ENCODE measurements at regions of chr11 and their contacts with region 1.

Region 1: DNA sequence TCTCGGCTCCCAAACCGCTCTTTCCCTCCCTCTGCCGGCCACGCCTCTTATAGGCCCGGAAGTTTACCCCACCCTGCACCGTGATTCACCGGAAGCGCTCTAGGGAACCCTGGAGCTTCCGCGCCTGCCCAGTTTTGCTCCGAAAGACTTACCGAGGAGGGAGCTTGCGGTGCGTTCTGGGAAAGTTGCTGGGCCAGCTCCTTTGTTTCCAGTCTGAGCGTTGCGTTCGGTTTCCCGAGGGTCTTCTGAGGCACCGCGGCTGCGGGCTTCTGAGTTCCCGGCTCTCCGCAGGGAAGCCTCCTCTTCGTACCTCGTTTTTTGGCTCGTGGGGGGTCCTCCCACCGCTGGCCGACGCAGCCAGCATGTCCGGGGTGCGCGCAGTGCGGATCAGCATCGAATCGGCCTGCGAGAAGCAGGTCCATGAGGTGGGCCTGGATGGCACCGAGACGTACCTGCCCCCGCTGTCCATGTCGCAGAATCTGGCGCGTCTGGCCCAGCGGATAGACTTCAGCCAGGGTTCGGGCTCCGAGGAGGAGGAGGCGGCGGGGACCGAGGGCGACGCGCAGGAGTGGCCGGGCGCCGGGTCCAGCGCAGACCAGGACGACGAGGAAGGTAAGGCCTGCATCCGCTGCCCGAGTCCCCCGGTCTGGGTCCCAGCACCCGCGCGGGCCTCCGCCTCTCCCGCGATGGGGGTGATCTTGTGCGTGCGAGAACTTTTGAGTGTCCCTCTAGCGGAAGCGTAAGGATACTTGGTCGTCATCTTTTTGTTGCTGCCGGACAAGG is at the start of gene MED17:
- DNase-seq: peak; percentile 96
- H3K4me3 ChIP-seq: peak within 1 kb of the TSS; percentile 86
- H3K4me3 Mint-ChIP-seq: peak within 1 kb of the TSS; percentile 81
- H3K27ac Mint-ChIP-seq: peak within 1 kb of the TSS; percentile 62
- H3K4me1 ChIP-seq: no peaks in the 10 kb centered on the region; the same call in 1 of the 2 replicates
- H3K4me1 Mint-ChIP-seq: peaks cover 17% of the 10 kb centered on the region
- H3K27me3 ChIP-seq: no peaks in the 10 kb centered on the region
- H3K27me3 Mint-ChIP-seq: no peaks in the 10 kb centered on the region
- CTCF ChIP-seq: peak; percentile 72 to 76
- total RNA-seq, gene MED17: 54.0 and 63.5 TPM in 2 replicates

Region 2: DNA sequence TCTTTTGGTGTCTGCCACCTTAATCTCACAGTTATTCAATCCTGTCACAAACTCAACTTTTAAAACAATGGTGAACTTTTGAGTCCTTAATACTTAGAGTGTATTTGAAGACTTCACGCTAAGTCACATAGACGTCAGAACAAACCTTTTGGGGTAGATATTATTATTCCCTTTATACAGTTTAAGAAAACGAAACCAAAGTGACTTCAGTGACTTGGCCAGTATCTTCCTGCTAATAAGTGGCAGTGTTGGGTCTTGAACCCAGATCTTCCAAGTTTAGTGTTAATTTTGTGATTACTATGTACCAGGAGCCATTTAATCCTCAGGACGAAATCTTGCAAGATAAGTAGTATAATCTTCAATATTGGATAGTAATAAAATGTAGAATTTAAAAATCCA is 122.2 kb before region 1 on chr11:
- CTCF ChIA-PET with region 1: no interaction called
- POLR2A ChIA-PET with region 1: interaction called, 6 read pairs
- intact Hi-C with region 1: loop called (anchors 5 kb)
- DNase-seq: no peak
- H3K4me3 ChIP-seq: peak overlapping the region; percentile 86
- H3K4me3 Mint-ChIP-seq: peak overlapping the region; percentile 87
- H3K27ac Mint-ChIP-seq: peak overlapping the region; percentile 90
- H3K4me1 ChIP-seq: peaks cover 11% of the 10 kb centered on the region
- H3K4me1 Mint-ChIP-seq: no peaks in the 10 kb centered on the region
- H3K27me3 ChIP-seq: no peaks in the 10 kb centered on the region; the same call in 1 of the 2 replicates
- H3K27me3 Mint-ChIP-seq: no peaks in the 10 kb centered on the region
- CTCF ChIP-seq: no peak

Region 3: GRCh38 chr11:93766504-93766903 is 17.8 kb before region 1 on chr11:
- CTCF ChIA-PET with region 1: interaction called, 6 read pairs
- POLR2A ChIA-PET with region 1: interaction called, 9 read pairs
- intact Hi-C with region 1: loop called (anchors 1 kb)
- DNase-seq: no peak
- H3K4me3 ChIP-seq: no peak overlapping the region
- H3K4me3 Mint-ChIP-seq: no peak overlapping the region
- H3K27ac Mint-ChIP-seq: no peak overlapping the region
- H3K4me1 ChIP-seq: peaks cover 30% of the 10 kb centered on the region
- H3K4me1 Mint-ChIP-seq: peaks cover 28% of the 10 kb centered on the region
- H3K27me3 ChIP-seq: no peaks in the 10 kb centered on the region
- H3K27me3 Mint-ChIP-seq: no peaks in the 10 kb centered on the region
- CTCF ChIP-seq: no peak

Region 4: GRCh38 chr11:93849751-93850593 is 65.6 kb after region 1 on chr11:
- CTCF ChIA-PET with region 1: interaction called, 4 read pairs
- POLR2A ChIA-PET with region 1: interaction called, 8 read pairs
- intact Hi-C with region 1: loop called (anchors 2 kb)
- DNase-seq: peak; percentile 55 to 66
- H3K4me3 ChIP-seq: peak overlapping the region; percentile 45
- H3K4me3 Mint-ChIP-seq: peak overlapping the region; percentile 70
- H3K27ac Mint-ChIP-seq: peak overlapping the region; percentile 24
- H3K4me1 ChIP-seq: peaks cover 6% of the 10 kb centered on the region
- H3K4me1 Mint-ChIP-seq: no peaks in the 10 kb centered on the region
- H3K27me3 ChIP-seq: no peaks in the 10 kb centered on the region
- H3K27me3 Mint-ChIP-seq: no peaks in the 10 kb centered on the region
- CTCF ChIP-seq: peak in 1 of 2 experiments; percentile 49

Region 5: GRCh38 chr11:93921695-93922468 is 137.5 kb after region 1 on chr11:
- CTCF ChIA-PET with region 1: no interaction called
- POLR2A ChIA-PET with region 1: no interaction called
- intact Hi-C with region 1: no loop called
- DNase-seq: peak; percentile 71 to 77
- H3K4me3 ChIP-seq: no peak overlapping the region
- H3K4me3 Mint-ChIP-seq: no peak overlapping the region
- H3K27ac Mint-ChIP-seq: no peak overlapping the region
- H3K4me1 ChIP-seq: no peaks in the 10 kb centered on the region
- H3K4me1 Mint-ChIP-seq: peaks cover 10% of the 10 kb centered on the region
- H3K27me3 ChIP-seq: no peaks in the 10 kb centered on the region
- H3K27me3 Mint-ChIP-seq: peaks cover 4% of the 10 kb centered on the region
- CTCF ChIP-seq: peak; percentile 85 to 90

Region 6: DNA sequence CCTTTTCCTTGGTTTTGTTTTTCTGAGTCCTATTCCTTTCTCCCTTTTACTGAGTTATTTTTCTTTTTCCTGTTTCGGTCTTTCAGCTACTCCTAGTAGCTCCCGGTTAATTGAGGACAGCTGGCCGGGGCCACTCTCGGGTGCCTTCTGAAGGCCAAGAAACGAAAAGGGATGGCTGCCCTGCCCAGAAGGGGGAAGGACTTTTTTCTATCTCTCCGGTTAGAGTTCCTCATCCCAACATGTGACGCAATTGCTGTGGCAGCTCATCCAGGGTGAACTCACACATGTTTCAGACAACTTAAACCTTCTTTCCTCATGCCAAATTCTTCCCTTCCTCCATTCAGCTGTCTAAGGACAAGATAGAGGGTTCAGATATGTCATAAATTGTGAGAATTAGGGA is 866.4 kb after region 1 on chr11:
- CTCF ChIA-PET with region 1: no interaction called
- POLR2A ChIA-PET with region 1: no interaction called
- intact Hi-C with region 1: no loop called
- DNase-seq: no peak
- H3K4me3 ChIP-seq: no peak overlapping the region
- H3K4me3 Mint-ChIP-seq: no peak overlapping the region
- H3K27ac Mint-ChIP-seq: peak overlapping the region; percentile 4
- H3K4me1 ChIP-seq: peaks cover 17% of the 10 kb centered on the region
- H3K4me1 Mint-ChIP-seq: peaks cover 24% of the 10 kb centered on the region
- H3K27me3 ChIP-seq: no peaks in the 10 kb centered on the region
- H3K27me3 Mint-ChIP-seq: no peaks in the 10 kb centered on the region
- CTCF ChIP-seq: no peak

Measured in Caco-2 (cell line).